HepG2 (cell line): ENCODE measurements at regions of chr2 and their contacts with region 1.

Region 1: DNA sequence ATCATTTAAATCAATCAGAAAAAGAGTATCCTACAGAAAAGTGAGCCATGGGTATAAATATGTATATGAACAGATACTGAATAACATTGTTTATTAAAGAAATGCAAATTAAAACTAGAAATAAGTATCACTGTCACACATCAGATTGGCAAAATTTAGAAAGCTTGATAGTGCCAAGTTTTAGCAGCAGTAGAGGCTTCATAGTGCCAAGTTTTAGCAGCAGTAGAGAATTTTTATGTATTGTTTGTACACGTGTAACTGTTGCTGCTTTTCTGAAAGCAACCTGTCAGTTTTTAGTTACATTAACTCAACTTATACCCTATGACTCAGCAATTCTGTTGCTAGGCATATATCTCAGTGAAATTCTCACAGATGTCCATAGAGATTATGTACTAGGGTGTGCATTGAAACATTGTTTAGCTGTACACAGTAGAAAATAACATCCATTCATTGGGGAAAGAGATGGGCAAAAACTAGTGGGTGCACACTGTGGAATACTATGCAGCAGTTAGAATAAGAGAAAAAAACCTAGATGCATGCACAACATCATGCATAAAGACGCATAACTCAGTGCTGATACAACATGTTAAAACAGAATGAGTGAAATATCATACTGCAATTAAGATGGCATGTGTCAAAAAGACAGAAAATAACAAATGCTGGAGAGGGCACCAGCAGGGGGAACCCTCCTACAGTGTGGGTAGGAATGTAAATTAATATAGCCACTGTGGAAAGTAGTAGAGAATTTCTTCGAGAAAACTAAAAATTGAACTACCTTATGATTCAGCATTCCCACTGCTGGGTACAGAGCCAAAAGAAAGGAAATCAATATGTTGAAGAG is 294.5 kb upstream of the NT5C1B start:
- DNase-seq: peak; percentile 7
- ATAC-seq: peak; percentile 53; the same call in 2 of the 3 replicates
- H3K4me3 ChIP-seq: no peak overlapping the region
- H3K27ac ChIP-seq: no peak overlapping the region
- H3K4me1 ChIP-seq: peaks cover under 1% of the 10 kb centered on the region
- H3K27me3 ChIP-seq: no peaks in the 10 kb centered on the region
- CTCF ChIP-seq: peak; percentile 57
- EP300 ChIP-seq: no peak
- POLR2A ChIP-seq: no peak
- RAD21 ChIP-seq: no peak

Region 2: DNA sequence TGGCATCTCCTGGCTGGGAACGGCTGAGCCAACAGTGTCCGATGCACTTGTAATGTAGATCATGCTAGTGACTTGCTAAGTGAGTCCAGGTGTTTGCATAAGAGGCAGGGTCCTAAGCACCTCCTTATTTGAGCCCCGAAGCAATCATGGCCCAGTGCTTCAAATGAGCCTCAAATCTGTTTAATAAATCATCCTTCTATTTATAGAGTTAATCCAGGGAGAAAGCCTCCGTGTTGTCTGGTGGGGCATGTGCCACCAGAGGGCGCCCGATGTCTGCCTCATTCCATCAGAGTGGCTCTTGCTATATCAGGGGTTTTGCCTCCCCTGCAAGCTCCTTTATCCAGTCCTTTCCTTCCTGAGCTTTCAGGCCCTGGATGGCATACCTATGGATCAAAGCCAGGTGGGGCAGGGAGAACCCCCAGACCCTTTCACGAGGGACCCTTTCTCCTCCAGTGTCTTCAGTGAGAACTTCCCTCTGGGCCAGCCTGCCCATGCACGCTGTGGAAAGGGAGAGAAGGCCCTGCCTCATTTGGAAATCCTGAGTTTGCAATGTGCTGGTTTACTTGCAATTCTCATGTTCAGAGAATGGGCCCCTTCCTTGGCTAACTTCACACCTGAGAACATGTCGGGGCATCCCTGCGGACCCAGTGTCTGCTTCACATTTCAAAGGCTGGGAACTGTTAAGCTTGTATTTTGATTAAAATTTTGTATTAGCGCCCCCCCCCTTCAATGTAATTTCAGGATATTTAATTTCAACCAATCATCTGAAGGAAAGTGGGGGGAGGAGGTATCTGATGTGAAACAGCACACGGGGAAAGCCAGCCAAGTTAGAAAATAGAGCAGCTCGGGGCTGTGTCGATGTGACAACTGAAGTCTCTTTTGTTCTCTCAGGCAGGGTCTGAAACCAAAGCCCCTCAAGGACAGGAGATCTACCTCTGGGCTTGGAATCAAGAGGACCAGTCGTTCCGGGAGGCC is 363.1 kb before region 1 on chr2:
- CTCF ChIA-PET with region 1: no interaction called
- POLR2A ChIA-PET with region 1: no interaction called
- in situ Hi-C with region 1: no loop called
- intact Hi-C with region 1: loop called (anchors 10 kb)
- DNase-seq: peak; percentile 71
- ATAC-seq: peak; percentile 96
- H3K4me3 ChIP-seq: no peak overlapping the region
- H3K27ac ChIP-seq: no peak overlapping the region
- H3K4me1 ChIP-seq: no peaks in the 10 kb centered on the region
- H3K27me3 ChIP-seq: peaks cover 2 to 11% of the 10 kb centered on the region in 2 experiments; a peak in 4 of 5 replicates
- CTCF ChIP-seq: peak; percentile 93
- EP300 ChIP-seq: no peak
- POLR2A ChIP-seq: no peak
- RAD21 ChIP-seq: peak; percentile 95

Region 3: GRCh38 chr2:19059064-19059463 is 175.2 kb after region 1 on chr2:
- CTCF ChIA-PET with region 1: no interaction called
- POLR2A ChIA-PET with region 1: no interaction called
- in situ Hi-C with region 1: no loop called
- intact Hi-C with region 1: loop called (anchors 10 kb)
- DNase-seq: no peak
- ATAC-seq: no peak
- H3K4me3 ChIP-seq: no peak overlapping the region
- H3K27ac ChIP-seq: no peak overlapping the region
- H3K4me1 ChIP-seq: no peaks in the 10 kb centered on the region
- H3K27me3 ChIP-seq: no peaks in the 10 kb centered on the region
- CTCF ChIP-seq: no peak
- EP300 ChIP-seq: no peak
- POLR2A ChIP-seq: no peak
- RAD21 ChIP-seq: no peak

Region 4: DNA sequence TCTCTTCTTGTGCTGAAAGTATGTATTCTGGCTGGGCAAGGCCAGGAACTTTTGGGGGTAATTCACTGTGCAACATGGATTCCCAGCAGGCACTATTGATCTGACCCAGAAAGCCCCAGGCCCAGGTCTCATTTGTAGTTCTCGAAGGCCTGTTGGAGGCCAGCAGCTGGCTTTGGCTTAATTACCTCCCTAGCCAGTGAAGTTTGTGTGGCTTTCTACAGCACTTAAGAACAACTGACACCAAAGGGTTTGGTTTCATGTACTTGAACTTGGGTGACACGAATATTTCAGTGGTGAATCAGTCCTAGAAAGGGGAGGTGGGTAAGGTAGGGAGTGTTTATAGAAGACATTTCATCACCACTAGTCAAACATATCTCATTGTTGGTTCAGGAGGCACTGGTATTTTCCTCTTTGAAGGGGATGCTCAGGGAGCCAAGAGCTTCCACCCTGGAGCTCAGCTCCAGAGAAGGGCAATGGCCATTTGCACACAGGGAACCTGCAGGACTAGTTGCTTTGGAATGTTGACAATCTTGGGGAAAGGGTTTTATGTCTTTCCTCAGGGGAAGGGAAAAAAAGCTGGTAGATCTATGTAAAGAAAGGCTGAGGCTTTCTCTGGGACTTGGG is 256.9 kb after region 1 on chr2:
- CTCF ChIA-PET with region 1: no interaction called
- POLR2A ChIA-PET with region 1: no interaction called
- in situ Hi-C with region 1: no loop called
- intact Hi-C with region 1: loop called (anchors 1 kb)
- DNase-seq: peak; percentile 99
- ATAC-seq: peak; percentile 100
- H3K4me3 ChIP-seq: no peak overlapping the region
- H3K27ac ChIP-seq: no peak overlapping the region
- H3K4me1 ChIP-seq: peaks cover 19% of the 10 kb centered on the region
- H3K27me3 ChIP-seq: no peaks in the 10 kb centered on the region
- CTCF ChIP-seq: no peak
- EP300 ChIP-seq: peak; percentile 75 to 93
- POLR2A ChIP-seq: no peak
- RAD21 ChIP-seq: no peak

Region 5: DNA sequence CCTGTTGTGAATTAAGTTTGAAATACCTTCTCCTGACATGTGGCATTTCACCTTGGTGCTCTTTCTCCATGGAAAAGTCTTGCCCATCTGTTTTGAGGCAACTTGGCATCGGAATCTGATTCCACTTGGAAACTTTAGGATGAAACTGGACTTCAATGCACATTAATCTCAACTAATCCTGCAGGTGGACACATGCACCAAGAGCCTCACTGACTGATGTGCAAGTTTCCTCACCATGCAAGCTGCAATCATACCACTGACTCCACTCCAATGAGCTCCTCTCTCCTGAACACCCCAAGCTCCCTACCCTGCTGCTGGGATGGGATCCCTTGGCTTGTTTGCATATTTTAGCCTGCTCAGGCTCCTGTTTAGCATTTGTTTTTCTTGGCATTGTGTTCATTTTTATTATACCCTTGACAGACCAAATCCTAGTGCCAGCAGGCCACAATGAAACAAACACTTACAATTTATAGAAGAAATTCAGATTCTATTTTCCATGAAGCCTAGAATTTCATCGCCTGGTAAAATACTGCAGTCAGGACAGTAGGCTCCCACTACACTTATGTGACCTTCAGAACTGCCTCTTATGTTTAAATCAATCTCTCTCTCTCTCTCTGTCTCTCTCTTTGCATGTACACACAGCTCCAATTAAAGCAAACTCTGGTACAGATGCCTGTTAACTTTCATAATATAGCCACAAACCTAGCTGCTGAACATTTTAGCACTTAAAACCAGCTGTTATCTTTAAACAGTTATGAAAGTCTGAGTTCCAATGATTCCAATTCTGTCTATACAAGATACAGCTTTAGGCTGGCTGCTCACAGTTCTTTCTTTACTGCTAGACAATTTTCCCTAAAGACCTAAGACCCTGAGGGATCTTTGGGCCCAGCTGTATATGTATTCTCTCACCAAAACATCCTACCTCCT is 333.1 kb after region 1 on chr2:
- CTCF ChIA-PET with region 1: no interaction called
- POLR2A ChIA-PET with region 1: no interaction called
- in situ Hi-C with region 1: no loop called
- intact Hi-C with region 1: loop called (anchors 5 kb)
- DNase-seq: no peak
- ATAC-seq: no peak
- H3K4me3 ChIP-seq: no peak overlapping the region
- H3K27ac ChIP-seq: no peak overlapping the region
- H3K4me1 ChIP-seq: no peaks in the 10 kb centered on the region
- H3K27me3 ChIP-seq: no peaks in the 10 kb centered on the region
- CTCF ChIP-seq: no peak
- EP300 ChIP-seq: no peak
- POLR2A ChIP-seq: no peak
- RAD21 ChIP-seq: no peak

Region 6: GRCh38 chr2:19746611-19747309 is 862.9 kb after region 1 on chr2:
- CTCF ChIA-PET with region 1: no interaction called
- POLR2A ChIA-PET with region 1: no interaction called
- in situ Hi-C with region 1: no loop called
- intact Hi-C with region 1: loop called (anchors 5 kb)
- DNase-seq: peak; percentile 19
- ATAC-seq: peak; percentile 75
- H3K4me3 ChIP-seq: no peak overlapping the region
- H3K27ac ChIP-seq: no peak overlapping the region
- H3K4me1 ChIP-seq: peaks cover 14% of the 10 kb centered on the region
- H3K27me3 ChIP-seq: peaks cover 4 to 17% of the 10 kb centered on the region in 2 experiments; a peak in 4 of 5 replicates
- CTCF ChIP-seq: peak; percentile 79
- EP300 ChIP-seq: no peak
- POLR2A ChIP-seq: no peak
- RAD21 ChIP-seq: peak; percentile 46